ENCODE measurements at regions of chr6 and their contacts with region 1.

Region 1: DNA sequence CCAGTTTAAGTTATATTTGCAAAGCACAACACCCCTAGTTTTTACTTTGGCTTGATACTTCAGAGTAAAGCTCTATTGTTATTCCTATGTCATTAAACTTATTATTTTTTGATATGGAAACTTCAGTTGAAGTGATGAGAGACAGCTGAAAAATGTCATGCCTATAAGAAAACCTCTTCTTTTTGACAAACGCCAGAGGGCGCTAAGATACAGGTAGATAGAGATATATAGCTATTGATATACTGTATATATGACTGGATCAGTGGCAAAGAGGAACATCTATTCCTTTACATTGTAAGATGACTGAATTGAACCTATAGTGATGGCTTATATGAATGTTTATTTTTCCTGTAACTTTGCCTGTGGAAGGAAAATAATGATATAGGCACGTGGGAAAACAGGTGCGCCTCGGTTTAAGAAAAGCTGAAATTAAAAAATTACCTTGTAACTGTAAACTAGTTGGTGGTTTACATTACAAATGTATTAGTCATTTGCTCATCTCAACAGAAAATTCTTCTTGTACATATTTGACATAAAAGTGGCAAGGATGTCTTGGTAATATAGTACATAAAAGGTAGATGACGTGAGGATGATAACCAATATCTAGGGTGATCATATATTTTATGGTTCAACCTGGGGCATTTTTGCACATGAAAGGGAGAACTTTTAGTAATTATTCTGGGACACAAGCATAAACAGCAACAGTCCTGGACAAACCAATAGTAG is 74.1 kb downstream of the LAMA4 start:
- DNase-seq: peak; percentile 69
- H3K4me3 Mint-ChIP-seq: no peak overlapping the region
- H3K27ac Mint-ChIP-seq: no peak overlapping the region
- H3K4me1 Mint-ChIP-seq: no peaks in the 10 kb centered on the region
- H3K27me3 Mint-ChIP-seq: no peaks in the 10 kb centered on the region

Region 2: DNA sequence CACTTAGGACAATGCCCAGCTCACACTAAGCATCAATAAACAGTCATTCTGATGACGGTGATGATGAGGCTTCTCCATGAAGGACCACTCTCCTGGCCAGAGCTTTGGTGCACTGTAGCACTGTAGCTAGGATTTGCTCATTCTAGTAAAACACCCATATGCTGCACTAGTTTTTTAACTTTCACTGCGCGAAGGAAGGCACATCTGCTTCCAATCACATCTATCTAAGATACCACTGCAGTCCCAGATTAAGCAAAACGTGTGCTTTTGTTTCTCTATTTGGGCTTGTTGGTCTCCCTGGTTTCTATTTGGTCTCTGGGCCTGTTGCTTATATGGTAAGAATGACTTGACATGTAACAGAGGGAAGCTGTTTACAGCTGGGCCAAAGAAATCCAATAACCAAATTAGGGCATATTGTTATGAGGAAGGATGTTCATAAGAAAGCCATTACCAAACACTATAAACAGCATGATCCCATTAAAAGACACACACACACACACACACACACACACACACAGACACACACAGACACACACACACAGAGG is 30.5 kb before region 1 on chr6:
- CTCF ChIA-PET with region 1: no interaction called
- intact Hi-C with region 1: no loop called
- DNase-seq: no peak
- H3K4me3 Mint-ChIP-seq: no peak overlapping the region
- H3K27ac Mint-ChIP-seq: no peak overlapping the region
- H3K4me1 Mint-ChIP-seq: peaks cover 13% of the 10 kb centered on the region
- H3K27me3 Mint-ChIP-seq: no peaks in the 10 kb centered on the region

Region 3: GRCh38 chr6:112163295-112164257 is 16.7 kb before region 1 on chr6:
- CTCF ChIA-PET with region 1: interaction called, 27 read pairs
- intact Hi-C with region 1: no loop called
- DNase-seq: peak; percentile 91
- H3K4me3 Mint-ChIP-seq: peak overlapping the region; percentile 61
- H3K27ac Mint-ChIP-seq: peak overlapping the region; percentile 37
- H3K4me1 Mint-ChIP-seq: peaks cover 12% of the 10 kb centered on the region
- H3K27me3 Mint-ChIP-seq: peaks cover 6% of the 10 kb centered on the region

Region 4: DNA sequence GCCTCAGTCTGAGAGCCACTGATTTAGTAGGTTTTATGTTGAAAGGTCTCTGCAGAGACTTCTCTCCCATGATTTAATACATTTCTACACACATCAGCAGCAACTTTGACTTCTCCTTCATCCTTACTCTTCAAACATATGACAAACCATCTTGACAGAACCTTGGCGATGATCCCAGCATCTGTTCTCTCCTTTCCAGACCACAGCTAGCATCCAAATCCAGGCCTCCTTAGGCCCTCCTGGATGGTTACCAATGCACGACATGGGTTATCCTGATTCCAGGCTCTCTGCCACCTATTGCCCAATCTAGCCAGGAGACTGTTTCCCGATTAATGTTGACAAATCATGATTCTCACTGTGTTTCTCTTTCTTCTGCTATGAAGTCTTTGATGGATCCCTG is 57.3 kb after region 1 on chr6:
- CTCF ChIA-PET with region 1: interaction called, 14 read pairs
- intact Hi-C with region 1: no loop called
- DNase-seq: no peak
- H3K4me3 Mint-ChIP-seq: no peak overlapping the region
- H3K27ac Mint-ChIP-seq: no peak overlapping the region
- H3K4me1 Mint-ChIP-seq: peaks cover 19% of the 10 kb centered on the region
- H3K27me3 Mint-ChIP-seq: peaks cover 7% of the 10 kb centered on the region

Region 5: GRCh38 chr6:112305795-112306564 is 125.7 kb after region 1 on chr6:
- CTCF ChIA-PET with region 1: interaction called, 56 read pairs
- intact Hi-C with region 1: no loop called
- DNase-seq: no peak
- H3K4me3 Mint-ChIP-seq: no peak overlapping the region
- H3K27ac Mint-ChIP-seq: no peak overlapping the region
- H3K4me1 Mint-ChIP-seq: no peaks in the 10 kb centered on the region
- H3K27me3 Mint-ChIP-seq: peaks cover 9% of the 10 kb centered on the region

Region 6: DNA sequence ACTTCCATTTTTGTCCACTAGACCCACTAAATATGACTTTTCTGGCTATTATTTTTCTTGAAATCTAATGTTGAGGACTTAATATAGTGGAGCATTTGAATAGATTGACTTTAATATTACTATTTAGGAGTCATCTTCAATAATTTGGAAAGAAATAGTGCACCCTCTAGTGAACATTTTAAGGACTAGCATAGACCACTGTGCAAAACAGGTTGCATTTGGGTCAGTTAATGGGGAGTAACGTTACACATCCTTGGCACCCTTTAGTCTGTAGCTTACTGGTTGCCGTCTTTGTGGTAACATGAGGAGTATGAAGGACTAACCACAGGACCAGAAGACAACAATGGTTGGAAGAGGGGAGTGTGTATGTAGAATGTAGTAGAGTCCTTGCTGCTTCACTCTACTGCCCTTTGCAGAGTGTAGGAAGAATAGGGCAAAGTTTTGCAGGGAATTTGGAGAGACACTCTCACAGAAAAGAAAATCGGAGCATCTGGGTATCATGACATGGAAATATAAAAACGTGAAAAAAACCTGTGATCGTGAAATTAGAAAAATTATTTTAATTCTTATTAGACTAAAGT is 192.1 kb after region 1 on chr6:
- CTCF ChIA-PET with region 1: interaction called, 10 read pairs
- intact Hi-C with region 1: loop called (anchors 1 kb)
- DNase-seq: no peak
- H3K4me3 Mint-ChIP-seq: no peak overlapping the region
- H3K27ac Mint-ChIP-seq: no peak overlapping the region
- H3K4me1 Mint-ChIP-seq: no peaks in the 10 kb centered on the region
- H3K27me3 Mint-ChIP-seq: peaks cover 8% of the 10 kb centered on the region

Region 7: GRCh38 chr6:112618849-112619248 is 438.6 kb after region 1 on chr6:
- CTCF ChIA-PET with region 1: interaction called, 3 read pairs
- intact Hi-C with region 1: loop called (anchors 5 kb)
- DNase-seq: no peak
- H3K4me3 Mint-ChIP-seq: no peak overlapping the region
- H3K27ac Mint-ChIP-seq: no peak overlapping the region
- H3K4me1 Mint-ChIP-seq: no peaks in the 10 kb centered on the region
- H3K27me3 Mint-ChIP-seq: no peaks in the 10 kb centered on the region

Region 8: GRCh38 chr6:112865120-112865519 is 684.9 kb after region 1 on chr6:
- CTCF ChIA-PET with region 1: no interaction called
- intact Hi-C with region 1: no loop called
- DNase-seq: no peak
- H3K4me3 Mint-ChIP-seq: no peak overlapping the region
- H3K27ac Mint-ChIP-seq: no peak overlapping the region
- H3K4me1 Mint-ChIP-seq: no peaks in the 10 kb centered on the region
- H3K27me3 Mint-ChIP-seq: no peaks in the 10 kb centered on the region

Region 9: DNA sequence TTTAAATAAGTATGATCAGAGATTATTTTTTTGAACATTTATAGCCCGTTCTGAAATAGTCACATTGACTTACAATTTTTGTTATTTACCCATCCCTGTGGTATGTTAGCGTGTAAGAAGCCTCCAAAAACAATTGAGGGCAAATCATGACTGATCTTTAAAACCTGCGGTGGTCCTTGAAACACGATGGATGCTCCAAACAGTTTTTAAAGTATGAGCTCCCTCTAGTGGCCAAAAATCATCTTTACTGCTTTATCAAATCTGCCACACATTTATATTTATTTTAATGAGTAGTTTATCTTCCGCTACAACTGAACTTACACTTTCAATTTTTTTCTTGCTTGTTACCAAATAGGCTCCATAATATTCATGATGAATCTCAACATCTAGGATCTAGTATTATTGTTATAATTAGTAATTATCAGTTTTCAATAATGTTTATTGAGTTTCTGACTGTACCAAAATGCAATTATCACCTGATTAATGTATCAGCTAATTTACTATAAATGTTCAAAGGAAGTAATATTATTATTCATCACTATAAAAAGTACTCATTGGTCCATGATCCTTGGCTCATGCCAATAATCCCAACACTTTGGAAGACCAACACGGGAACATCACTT is 1729.1 kb after region 1 on chr6:
- CTCF ChIA-PET with region 1: interaction called, 6 read pairs
- intact Hi-C with region 1: loop called (anchors 1 kb)
- DNase-seq: no peak
- H3K4me3 Mint-ChIP-seq: no peak overlapping the region
- H3K27ac Mint-ChIP-seq: no peak overlapping the region
- H3K4me1 Mint-ChIP-seq: no peaks in the 10 kb centered on the region
- H3K27me3 Mint-ChIP-seq: peaks cover 3% of the 10 kb centered on the region